Heart left ventricle (tissue), 16 donors: ENCODE measurements at regions of chr5 and their contacts with region 1.

Region 1: DNA sequence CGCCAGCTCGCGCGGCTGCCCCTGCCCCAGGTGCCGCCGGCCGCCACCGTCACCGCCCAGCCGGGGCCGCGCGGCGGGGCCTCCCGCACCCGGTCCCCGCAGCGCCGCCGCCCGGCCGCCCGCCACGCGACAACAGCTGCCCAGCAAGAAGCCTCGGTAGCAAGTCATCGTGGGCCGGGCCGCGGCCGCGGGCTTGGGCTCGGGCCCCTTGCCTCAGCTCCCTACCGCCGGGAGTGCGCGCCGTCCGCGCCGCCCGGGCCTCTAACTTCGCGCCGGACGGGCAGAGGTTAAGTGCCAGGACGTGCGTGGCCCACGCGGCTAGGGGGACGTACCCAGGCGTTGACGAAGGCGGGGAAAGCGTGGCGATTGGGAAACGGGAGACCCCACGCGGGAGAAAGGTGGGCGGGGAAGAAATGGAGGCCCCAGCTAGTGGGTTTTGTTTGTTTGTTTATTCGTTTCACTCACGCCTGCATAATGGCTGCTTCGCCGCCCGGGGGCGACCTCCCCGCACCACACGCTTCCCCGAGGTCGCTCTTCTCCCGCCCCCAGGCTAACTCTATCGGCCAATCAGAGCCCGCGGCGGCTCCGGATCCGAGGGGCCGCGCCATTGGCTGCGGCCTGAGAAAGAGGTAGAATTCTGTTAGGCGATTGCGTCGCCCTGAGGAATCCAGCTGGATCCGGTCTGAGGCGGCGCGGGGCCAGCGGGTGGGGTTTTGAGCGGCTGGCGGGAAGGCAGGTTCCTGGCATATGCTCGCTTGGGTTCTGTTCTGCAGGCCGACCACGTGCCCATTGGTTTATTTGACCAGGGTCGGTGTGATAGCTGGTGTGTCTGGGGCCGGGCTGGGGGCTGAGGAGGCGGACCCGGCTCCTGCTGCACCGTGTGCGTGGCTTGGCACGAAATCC is at the start of gene NADK2:
- DNase-seq: peak; percentile 96 to 97 (median 96)
- ATAC-seq: peak; percentile 93 to 96 (median 94)
- H3K4me3 ChIP-seq: peak within 1 kb of the TSS; percentile 46 to 97 (median 90)
- H3K27ac ChIP-seq: peak within 1 kb of the TSS; percentile 86 to 99 (median 96)
- H3K4me1 ChIP-seq: peaks cover 0 to 44% (median 36%) of the 10 kb centered on the region in 12 donors
- H3K27me3 ChIP-seq: no peaks in the 10 kb centered on the region
- CTCF ChIP-seq: peak; percentile 65 to 89 (median 72)
- POLR2A ChIP-seq: peak; percentile 70 to 86
- total RNA-seq, gene NADK2: 25.8 to 41.8 (median 37.2) TPM

Region 2: GRCh38 chr5:34923694-34924461 is 1318.0 kb before region 1 on chr5:
- intact Hi-C with region 1: loop called in 1 of 10 experiments (anchors 5 kb)
- DNase-seq: no peak
- ATAC-seq: peak in 2 of 4 donors; percentile 62 to 82
- H3K4me3 ChIP-seq: no peak overlapping the region
- H3K27ac ChIP-seq: peak overlapping the region in 2 of 12 donors; percentile 28 to 37
- H3K4me1 ChIP-seq: peaks cover 0 to 14% (median 3%) of the 10 kb centered on the region in 12 donors
- H3K27me3 ChIP-seq: no peaks in the 10 kb centered on the region
- CTCF ChIP-seq: no peak
- POLR2A ChIP-seq: no peak

Region 3: GRCh38 chr5:36530215-36530614 is 288.3 kb after region 1 on chr5:
- intact Hi-C with region 1: no loop called
- DNase-seq: no peak
- ATAC-seq: no peak
- H3K4me3 ChIP-seq: no peak overlapping the region
- H3K27ac ChIP-seq: no peak overlapping the region
- H3K4me1 ChIP-seq: peaks cover 0 to 18% (median 0%) of the 10 kb centered on the region in 12 donors
- H3K27me3 ChIP-seq: no peaks in the 10 kb centered on the region
- CTCF ChIP-seq: no peak
- POLR2A ChIP-seq: no peak